ENCODE measurements at regions of chr11 and their contacts with region 1.

Region 1: DNA sequence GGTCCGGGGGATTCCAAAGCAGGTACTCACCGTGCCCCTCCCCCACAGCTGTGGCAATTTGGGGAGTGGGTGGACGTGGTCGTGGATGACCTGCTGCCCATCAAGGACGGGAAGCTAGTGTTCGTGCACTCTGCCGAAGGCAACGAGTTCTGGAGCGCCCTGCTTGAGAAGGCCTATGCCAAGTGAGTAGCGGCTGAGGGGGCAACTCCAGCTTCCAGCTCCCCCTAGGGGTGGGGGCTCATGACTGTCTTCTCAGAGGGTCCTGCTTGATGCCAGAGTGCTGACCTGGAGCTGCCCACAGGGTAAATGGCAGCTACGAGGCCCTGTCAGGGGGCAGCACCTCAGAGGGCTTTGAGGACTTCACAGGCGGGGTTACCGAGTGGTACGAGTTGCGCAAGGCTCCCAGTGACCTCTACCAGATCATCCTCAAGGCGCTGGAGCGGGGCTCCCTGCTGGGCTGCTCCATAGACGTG is 4.2 kb downstream of the CAPN1 start:
- DNase-seq: peak in 1 of 4 donors; percentile 7
- ATAC-seq: no peak
- H3K4me3 ChIP-seq: no peak overlapping the region
- H3K27ac ChIP-seq: no peak overlapping the region
- H3K4me1 ChIP-seq: peaks cover 31% of the 10 kb centered on the region
- H3K27me3 ChIP-seq: no peaks in the 10 kb centered on the region
- CTCF ChIP-seq: no peak
- POLR2A ChIP-seq: no peak

Region 2: GRCh38 chr11:65095974-65096806 is 89.7 kb before region 1 on chr11 and contains the start of gene VPS51:
- intact Hi-C with region 1: no loop called
- DNase-seq: peak; percentile 88 to 95 (median 94)
- ATAC-seq: peak; percentile 95
- H3K4me3 ChIP-seq: peak within 1 kb of the TSS; percentile 83 to 84
- H3K27ac ChIP-seq: peak within 1 kb of the TSS; percentile 84 to 99 (median 94)
- H3K4me1 ChIP-seq: peaks cover 34% of the 10 kb centered on the region
- H3K27me3 ChIP-seq: no peaks in the 10 kb centered on the region
- CTCF ChIP-seq: peak in 3 of 7 experiments; percentile 17 to 39 (median 30)
- POLR2A ChIP-seq: peak; percentile 68 to 86 (median 85)
- total RNA-seq, gene VPS51: 206 to 360 TPM

Region 3: GRCh38 chr11:65134386-65135253 is 51.3 kb before region 1 on chr11 and contains the start of gene SYVN1:
- intact Hi-C with region 1: loop called (anchors 5 kb)
- DNase-seq: peak; percentile 98 to 99 (median 99)
- ATAC-seq: peak; percentile 89
- H3K4me3 ChIP-seq: peak within 1 kb of the TSS; percentile 63 to 83
- H3K27ac ChIP-seq: peak within 1 kb of the TSS; percentile 98 to 100 (median 99)
- H3K4me1 ChIP-seq: peaks cover 49% of the 10 kb centered on the region
- H3K27me3 ChIP-seq: no peaks in the 10 kb centered on the region
- CTCF ChIP-seq: peak in 1 of 7 experiments; percentile 17
- POLR2A ChIP-seq: peak; percentile 96 to 99 (median 98)
- total RNA-seq, gene SYVN1: 41.0 to 97.2 TPM

Measured in body of pancreas (tissue), 4 donors.